ENCODE measurements at regions of chr5 and their contacts with region 1.

Region 1: GRCh38 chr5:142922223-142922952 is 152.2 kb downstream of the ARHGAP26 start:
- DNase-seq: peak; percentile 77
- ATAC-seq: peak; percentile 64
- H3K4me3 ChIP-seq: no peak overlapping the region
- H3K27ac ChIP-seq: no peak overlapping the region
- H3K4me1 ChIP-seq: peaks cover 7% of the 10 kb centered on the region
- H3K27me3 ChIP-seq: no peaks in the 10 kb centered on the region
- CTCF ChIP-seq: peak; percentile 50
- POLR2A ChIP-seq: no peak
- RAD21 ChIP-seq: peak; percentile 64

Region 2: GRCh38 chr5:143008809-143009521 is 86.6 kb after region 1 on chr5:
- CTCF ChIA-PET with region 1: interaction called, 5 read pairs
- POLR2A ChIA-PET with region 1: no interaction called
- dilution Hi-C with region 1: no loop called
- in situ Hi-C with region 1: no loop called
- intact Hi-C with region 1: loop called (anchors 2 kb)
- DNase-seq: peak; percentile 100
- ATAC-seq: peak; percentile 74
- H3K4me3 ChIP-seq: peak overlapping the region; percentile 37; the same call in 1 of the 2 replicates
- H3K27ac ChIP-seq: 0 out of 2 replicates have a peak overlapping the region, but pooled peaks have one; percentile 8
- H3K4me1 ChIP-seq: peaks cover 4% of the 10 kb centered on the region; the same call in 1 of the 2 replicates
- H3K27me3 ChIP-seq: no peaks in the 10 kb centered on the region
- CTCF ChIP-seq: peak; percentile 44
- POLR2A ChIP-seq: no peak
- RAD21 ChIP-seq: peak; percentile 67

Region 3: GRCh38 chr5:143279698-143280097 is 357.3 kb after region 1 on chr5:
- CTCF ChIA-PET with region 1: no interaction called
- POLR2A ChIA-PET with region 1: no interaction called
- dilution Hi-C with region 1: no loop called
- in situ Hi-C with region 1: no loop called
- intact Hi-C with region 1: loop called (anchors 10 kb)
- DNase-seq: peak; percentile 53
- ATAC-seq: peak; percentile 93
- H3K4me3 ChIP-seq: no peak overlapping the region
- H3K27ac ChIP-seq: no peak overlapping the region
- H3K4me1 ChIP-seq: peaks cover 3% of the 10 kb centered on the region
- H3K27me3 ChIP-seq: no peaks in the 10 kb centered on the region
- CTCF ChIP-seq: no peak
- POLR2A ChIP-seq: no peak
- RAD21 ChIP-seq: no peak

Region 4: GRCh38 chr5:144170276-144171024 is 1248.1 kb after region 1 on chr5 and contains the starts of genes KCTD16 and YIPF5:
- CTCF ChIA-PET with region 1: no interaction called
- POLR2A ChIA-PET with region 1: no interaction called
- dilution Hi-C with region 1: no loop called
- in situ Hi-C with region 1: loop called (anchors 25 kb)
- intact Hi-C with region 1: loop called (anchors 5 kb)
- DNase-seq: peak; percentile 96
- ATAC-seq: peak; percentile 98
- H3K4me3 ChIP-seq: peak within 1 kb of the TSS; percentile 80
- H3K27ac ChIP-seq: peak within 1 kb of the TSS; percentile 93
- H3K4me1 ChIP-seq: peaks cover 1% of the 10 kb centered on the region; the same call in 1 of the 2 replicates
- H3K27me3 ChIP-seq: no peaks in the 10 kb centered on the region
- CTCF ChIP-seq: no peak
- POLR2A ChIP-seq: peak; percentile 93
- RAD21 ChIP-seq: no peak
- total RNA-seq, gene KCTD16: 1.1 and 1.4 TPM in 2 replicates
- total RNA-seq, gene YIPF5: 172 and 192 TPM in 2 replicates